ENCODE measurements at regions of chr1 and their contacts with region 1.

Region 1: GRCh38 chr1:155514582-155515187 is 47.9 kb downstream of the ASH1L start:
- DNase-seq: no peak
- H3K4me3 Mint-ChIP-seq: peak overlapping the region; percentile 54
- H3K27ac Mint-ChIP-seq: peak overlapping the region; percentile 74
- H3K4me1 Mint-ChIP-seq: peaks cover 27% of the 10 kb centered on the region
- H3K27me3 Mint-ChIP-seq: no peaks in the 10 kb centered on the region

Region 2: GRCh38 chr1:155527677-155528076 is 13.0 kb after region 1 on chr1:
- intact Hi-C with region 1: no loop called
- DNase-seq: no peak
- H3K4me3 Mint-ChIP-seq: no peak overlapping the region
- H3K27ac Mint-ChIP-seq: no peak overlapping the region
- H3K4me1 Mint-ChIP-seq: peaks cover 20% of the 10 kb centered on the region
- H3K27me3 Mint-ChIP-seq: no peaks in the 10 kb centered on the region

Region 3: DNA sequence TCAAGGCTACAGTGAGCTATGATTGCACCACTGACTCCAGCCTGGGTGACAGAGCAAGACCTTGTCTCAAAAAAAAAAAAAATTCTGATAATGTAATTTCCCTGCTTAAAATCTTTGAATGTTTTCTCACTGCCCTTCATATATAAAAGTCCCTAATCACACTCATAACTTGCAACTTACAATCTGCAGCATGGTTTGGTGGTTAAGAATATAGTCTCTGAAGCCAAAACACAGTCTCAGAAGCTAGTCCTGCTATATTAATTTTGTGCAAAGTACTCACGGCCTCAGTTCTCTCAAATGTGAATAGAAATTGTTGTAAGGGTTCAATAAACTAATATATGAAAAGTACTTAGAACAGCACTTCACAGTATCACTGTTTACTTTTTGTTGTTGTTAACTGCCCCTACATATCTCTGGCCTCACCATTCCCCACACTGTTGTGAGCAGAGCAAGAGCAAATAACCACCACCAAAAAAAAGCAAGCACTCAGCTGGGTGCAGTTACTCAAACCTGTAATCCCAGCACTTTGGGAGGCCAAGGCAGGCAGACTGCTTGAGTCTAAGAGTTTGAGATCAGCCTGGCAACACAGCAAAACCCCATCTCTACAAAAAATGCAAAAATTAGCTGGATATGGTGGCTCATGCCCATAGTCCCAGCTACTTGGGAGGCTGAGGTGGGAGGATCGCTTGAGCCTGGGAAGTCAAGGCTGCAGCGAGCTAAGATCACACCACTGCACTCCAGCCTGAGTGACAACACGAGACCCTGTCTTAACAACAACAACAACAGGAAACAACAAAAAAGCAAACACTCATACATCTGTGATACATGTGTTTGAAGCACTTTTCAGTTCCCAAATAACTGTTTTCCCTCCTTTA is 25.6 kb after region 1 on chr1:
- intact Hi-C with region 1: loop called (anchors 2 kb)
- DNase-seq: no peak
- H3K4me3 Mint-ChIP-seq: peak overlapping the region; percentile 20
- H3K27ac Mint-ChIP-seq: peak overlapping the region; percentile 68
- H3K4me1 Mint-ChIP-seq: peaks cover 43% of the 10 kb centered on the region
- H3K27me3 Mint-ChIP-seq: no peaks in the 10 kb centered on the region

Region 4: GRCh38 chr1:155562581-155563376 is 48.1 kb after region 1 on chr1 and contains the start of gene ASH1L:
- intact Hi-C with region 1: no loop called
- DNase-seq: peak; percentile 87
- H3K4me3 Mint-ChIP-seq: peak within 1 kb of the TSS; percentile 99
- H3K27ac Mint-ChIP-seq: peak within 1 kb of the TSS; percentile 99
- H3K4me1 Mint-ChIP-seq: peaks cover 21% of the 10 kb centered on the region
- H3K27me3 Mint-ChIP-seq: no peaks in the 10 kb centered on the region
- total RNA-seq, gene ASH1L: 39.5 and 40.3 TPM in 2 replicates